Heart right ventricle (tissue), 16 donors: ENCODE measurements at regions of chr20 and their contacts with region 1.

Region 1: DNA sequence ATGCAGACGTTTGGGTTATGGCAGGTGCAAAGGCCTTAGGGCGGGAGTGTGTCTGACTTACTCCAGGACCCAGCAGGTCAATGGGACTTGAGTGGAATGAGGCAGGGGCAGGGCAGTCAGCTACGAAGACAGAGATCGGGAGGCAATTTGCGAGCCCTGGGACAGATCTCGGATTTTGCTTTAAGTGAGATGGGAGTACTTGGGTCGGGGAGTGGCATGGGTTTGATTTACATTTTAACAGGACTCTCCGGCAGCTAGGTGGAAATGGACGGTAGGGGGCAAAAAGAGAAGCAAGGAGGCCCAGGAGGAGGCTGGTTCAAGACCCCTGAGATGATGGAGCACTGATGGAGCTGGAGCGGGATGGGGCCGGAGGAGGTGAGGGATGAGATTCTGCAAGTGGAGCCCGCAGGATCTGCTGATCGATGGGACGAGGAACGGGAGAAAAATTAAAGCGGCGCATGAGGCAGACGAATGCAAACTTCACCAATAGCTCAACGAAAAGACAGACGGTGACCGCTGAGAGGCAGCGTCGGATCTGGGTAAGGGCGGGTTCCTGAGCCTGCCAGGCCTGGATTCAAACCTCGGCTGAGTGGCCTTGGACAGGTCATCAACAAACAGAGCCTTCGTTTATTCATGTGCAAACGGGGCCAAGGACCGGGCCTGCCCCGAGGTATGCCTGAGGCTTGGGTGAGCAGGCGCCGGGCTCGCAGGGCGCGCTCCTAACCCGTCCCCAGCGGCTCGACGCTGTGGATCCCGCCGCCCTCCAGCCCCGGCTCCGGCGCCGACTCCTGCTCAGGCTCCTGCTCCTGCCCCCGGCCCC is 756 bp upstream of the RBCK1 start:
- DNase-seq: peak; percentile 68 to 83
- ATAC-seq: peak; percentile 54 to 87 (median 84)
- H3K4me3 ChIP-seq: peak overlapping the region in 9 of 10 donors; percentile 76 to 100 (median 92)
- H3K27ac ChIP-seq: peak overlapping the region in 9 of 10 donors; percentile 95 to 98 (median 96)
- H3K4me1 ChIP-seq: peaks cover 3 to 29% (median 19%) of the 10 kb centered on the region in 9 donors
- H3K27me3 ChIP-seq: no peaks in the 10 kb centered on the region
- CTCF ChIP-seq: peak in 5 of 9 donors; percentile 18 to 48 (median 36)

Region 2: GRCh38 chr20:362271-363254 is 44.8 kb before region 1 on chr20:
- intact Hi-C with region 1: loop called in 4 of 10 experiments (anchors 5 to 10 kb)
- DNase-seq: peak; percentile 85 to 86
- ATAC-seq: peak; percentile 85 to 97 (median 92)
- H3K4me3 ChIP-seq: no peak overlapping the region
- H3K27ac ChIP-seq: no peak overlapping the region
- H3K4me1 ChIP-seq: peaks cover 0 to 10% (median 7%) of the 10 kb centered on the region in 9 donors
- H3K27me3 ChIP-seq: no peaks in the 10 kb centered on the region
- CTCF ChIP-seq: peak in 8 of 9 donors; percentile 13 to 60 (median 49)

Region 3: GRCh38 chr20:462199-462991 is 55.1 kb after region 1 on chr20 and contains the start of gene TBC1D20:
- intact Hi-C with region 1: loop called in 2 of 10 experiments (anchors 5 to 10 kb)
- DNase-seq: peak; percentile 83 to 87
- ATAC-seq: peak; percentile 96 to 99 (median 98)
- H3K4me3 ChIP-seq: peak within 1 kb of the TSS; percentile 70 to 94 (median 86)
- H3K27ac ChIP-seq: peak within 1 kb of the TSS; percentile 87 to 99 (median 94)
- H3K4me1 ChIP-seq: peaks cover 2 to 53% (median 40%) of the 10 kb centered on the region in 9 donors
- H3K27me3 ChIP-seq: no peaks in the 10 kb centered on the region
- CTCF ChIP-seq: peak in 5 of 9 donors; percentile 17 to 47 (median 41)
- total RNA-seq, gene TBC1D20: 20.3 to 28.2 (median 23.5) TPM

Region 4: DNA sequence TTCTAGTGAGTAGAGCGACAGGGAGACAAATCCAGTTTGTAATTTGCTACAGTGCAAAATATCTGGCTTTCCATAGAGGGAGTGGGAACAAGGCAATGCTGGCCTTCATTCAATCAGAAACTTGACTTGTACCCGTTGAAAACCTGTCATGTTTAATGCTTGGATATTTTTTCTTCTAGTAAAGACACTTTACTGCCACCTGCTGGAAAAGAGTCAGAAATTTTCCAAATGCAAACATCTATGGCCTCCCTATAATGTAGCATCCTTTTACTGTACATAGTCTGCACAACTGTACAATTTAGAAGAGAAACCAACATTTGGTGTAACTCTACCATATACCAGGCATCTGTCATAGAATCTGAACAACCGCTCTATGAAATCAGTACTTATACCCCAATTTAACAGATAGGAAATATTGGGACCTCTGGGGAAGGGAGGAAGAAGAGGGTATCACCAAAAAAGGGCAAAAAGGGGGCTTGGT is 71.6 kb after region 1 on chr20:
- intact Hi-C with region 1: loop called in 4 of 10 experiments (anchors 1 to 10 kb)
- DNase-seq: peak in 1 of 2 donors; percentile 24
- ATAC-seq: peak in 6 of 8 donors; percentile 15 to 56 (median 42)
- H3K4me3 ChIP-seq: no peak overlapping the region
- H3K27ac ChIP-seq: no peak overlapping the region
- H3K4me1 ChIP-seq: peaks cover 0 to 20% (median 8%) of the 10 kb centered on the region in 9 donors
- H3K27me3 ChIP-seq: no peaks in the 10 kb centered on the region
- CTCF ChIP-seq: peak; percentile 43 to 76 (median 67)